ENCODE measurements at regions of chr22 and their contacts with region 1.

Region 1: GRCh38 chr22:41532908-41533825 is 11.1 kb downstream of the POLR3H start:
- DNase-seq: peak; percentile 58

Region 2: GRCh38 chr22:41589391-41590241 is 56.4 kb after region 1 on chr22 and contains the start of gene PMM1:
- in situ Hi-C with region 1: loop called (anchors 10 kb)
- DNase-seq: peak; percentile 100